PC-9 (cell line): ENCODE measurements at regions of chr2 and their contacts with region 1.

Region 1: GRCh38 chr2:72579591-72580180 is 246.1 kb downstream of the EXOC6B start:
- DNase-seq: peak in 1 of 2 experiments; percentile 58
- H3K4me3 ChIP-seq: no peak overlapping the region
- H3K27ac ChIP-seq: no peak overlapping the region
- H3K4me1 ChIP-seq: peaks cover 9% of the 10 kb centered on the region
- H3K27me3 ChIP-seq: no peaks in the 10 kb centered on the region
- CTCF ChIP-seq: peak; percentile 90

Region 2: GRCh38 chr2:71545572-71546274 is 1034.0 kb before region 1 on chr2:
- CTCF ChIA-PET with region 1: interaction called, 4 read pairs
- POLR2A ChIA-PET with region 1: no interaction called
- intact Hi-C with region 1: loop called (anchors 1 kb)
- DNase-seq: peak; percentile 31 to 48
- H3K4me3 ChIP-seq: no peak overlapping the region
- H3K27ac ChIP-seq: no peak overlapping the region
- H3K4me1 ChIP-seq: no peaks in the 10 kb centered on the region
- H3K27me3 ChIP-seq: no peaks in the 10 kb centered on the region
- CTCF ChIP-seq: peak; percentile 87

Region 3: GRCh38 chr2:71675296-71675695 is 904.4 kb before region 1 on chr2:
- CTCF ChIA-PET with region 1: no interaction called
- POLR2A ChIA-PET with region 1: no interaction called
- intact Hi-C with region 1: no loop called
- DNase-seq: peak; percentile 64 to 66
- H3K4me3 ChIP-seq: no peak overlapping the region
- H3K27ac ChIP-seq: no peak overlapping the region
- H3K4me1 ChIP-seq: 0 out of 2 replicates have a peak, but pooled peaks cover 7% of the 10 kb centered on the region
- H3K27me3 ChIP-seq: no peaks in the 10 kb centered on the region
- CTCF ChIP-seq: no peak

Region 4: DNA sequence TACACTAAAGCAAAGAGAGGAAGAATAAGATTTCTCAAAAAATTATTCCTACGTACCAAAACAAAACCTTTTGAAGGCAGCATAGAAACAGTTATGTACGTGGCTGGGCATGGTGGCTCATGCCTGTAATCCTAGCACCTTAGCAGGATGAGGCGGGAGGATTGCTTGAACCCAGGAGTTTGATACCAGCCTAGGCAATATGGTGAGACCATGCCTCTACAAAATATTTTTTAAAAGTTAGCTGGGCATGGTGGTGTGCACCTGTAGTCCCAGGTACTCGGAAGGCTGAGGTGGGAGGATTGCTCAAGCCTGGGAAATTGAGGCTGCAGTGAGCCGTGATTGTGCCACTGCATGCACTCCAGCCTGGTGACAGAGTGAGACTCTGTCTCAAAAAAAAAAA is 417.1 kb before region 1 on chr2:
- CTCF ChIA-PET with region 1: no interaction called
- POLR2A ChIA-PET with region 1: no interaction called
- intact Hi-C with region 1: loop called (anchors 5 kb)
- DNase-seq: no peak
- H3K4me3 ChIP-seq: no peak overlapping the region
- H3K27ac ChIP-seq: no peak overlapping the region
- H3K4me1 ChIP-seq: peaks cover 13% of the 10 kb centered on the region
- H3K27me3 ChIP-seq: no peaks in the 10 kb centered on the region
- CTCF ChIP-seq: no peak

Region 5: GRCh38 chr2:72367530-72368225 is 212.0 kb before region 1 on chr2:
- CTCF ChIA-PET with region 1: no interaction called
- POLR2A ChIA-PET with region 1: no interaction called
- intact Hi-C with region 1: loop called (anchors 10 kb)
- DNase-seq: peak; percentile 84 to 97
- H3K4me3 ChIP-seq: no peak overlapping the region
- H3K27ac ChIP-seq: no peak overlapping the region
- H3K4me1 ChIP-seq: no peaks in the 10 kb centered on the region
- H3K27me3 ChIP-seq: no peaks in the 10 kb centered on the region
- CTCF ChIP-seq: peak; percentile 67

Region 6: GRCh38 chr2:72745679-72746368 is 166.1 kb after region 1 on chr2:
- CTCF ChIA-PET with region 1: no interaction called
- POLR2A ChIA-PET with region 1: no interaction called
- intact Hi-C with region 1: loop called (anchors 10 kb)
- DNase-seq: peak in 1 of 2 experiments; percentile 62
- H3K4me3 ChIP-seq: no peak overlapping the region
- H3K27ac ChIP-seq: no peak overlapping the region
- H3K4me1 ChIP-seq: peaks cover 6% of the 10 kb centered on the region; the same call in 1 of the 2 replicates
- H3K27me3 ChIP-seq: no peaks in the 10 kb centered on the region
- CTCF ChIP-seq: peak; percentile 90